ENCODE measurements at regions of chr11 and their contacts with region 1.

Region 1: DNA sequence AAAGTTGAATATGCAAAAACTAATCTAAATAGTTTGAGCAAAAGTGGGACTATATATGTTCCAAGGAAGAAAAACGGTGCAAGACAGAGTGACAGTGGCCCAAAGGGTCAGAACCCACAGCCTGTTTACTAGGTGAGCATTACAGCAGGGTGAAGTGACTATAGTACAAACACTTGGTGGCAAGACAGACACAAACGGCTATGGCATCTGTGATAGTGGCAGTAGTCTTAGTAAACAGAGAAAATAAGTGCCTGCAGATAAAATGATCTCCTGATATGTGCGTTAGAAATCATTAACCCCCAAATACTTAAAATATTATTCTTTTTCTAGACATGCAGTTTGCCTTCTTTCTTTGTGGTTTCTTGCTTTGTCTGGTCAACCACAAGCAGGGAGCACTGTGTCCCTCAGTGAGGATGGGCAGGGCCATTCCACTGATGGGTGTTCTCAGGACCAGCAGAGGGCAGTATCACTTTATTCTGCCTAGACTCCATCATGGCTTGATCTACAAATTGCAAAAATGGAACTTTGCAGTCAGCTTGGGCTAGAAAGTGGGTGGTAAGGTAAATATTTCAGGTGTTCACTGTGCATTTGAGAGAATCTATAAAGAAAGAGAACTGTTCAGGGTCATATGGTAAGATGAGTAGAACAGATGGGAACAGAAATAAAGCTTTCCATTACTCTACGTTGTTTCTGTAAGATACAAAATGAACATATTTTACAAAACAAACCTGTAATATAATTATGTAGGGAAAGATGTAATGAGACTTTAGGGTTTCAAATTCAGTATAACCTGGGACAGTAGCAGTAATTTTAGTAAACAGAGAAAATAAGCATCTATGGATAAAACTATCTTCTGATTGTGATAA is 198.2 kb downstream of the SWAP70 start:
- DNase-seq: peak; percentile 50
- ATAC-seq: peak; percentile 88 to 90

Region 2: GRCh38 chr11:10091314-10092045 is 229.4 kb after region 1 on chr11:
- intact Hi-C with region 1: no loop called
- DNase-seq: no peak
- ATAC-seq: no peak

Region 3: DNA sequence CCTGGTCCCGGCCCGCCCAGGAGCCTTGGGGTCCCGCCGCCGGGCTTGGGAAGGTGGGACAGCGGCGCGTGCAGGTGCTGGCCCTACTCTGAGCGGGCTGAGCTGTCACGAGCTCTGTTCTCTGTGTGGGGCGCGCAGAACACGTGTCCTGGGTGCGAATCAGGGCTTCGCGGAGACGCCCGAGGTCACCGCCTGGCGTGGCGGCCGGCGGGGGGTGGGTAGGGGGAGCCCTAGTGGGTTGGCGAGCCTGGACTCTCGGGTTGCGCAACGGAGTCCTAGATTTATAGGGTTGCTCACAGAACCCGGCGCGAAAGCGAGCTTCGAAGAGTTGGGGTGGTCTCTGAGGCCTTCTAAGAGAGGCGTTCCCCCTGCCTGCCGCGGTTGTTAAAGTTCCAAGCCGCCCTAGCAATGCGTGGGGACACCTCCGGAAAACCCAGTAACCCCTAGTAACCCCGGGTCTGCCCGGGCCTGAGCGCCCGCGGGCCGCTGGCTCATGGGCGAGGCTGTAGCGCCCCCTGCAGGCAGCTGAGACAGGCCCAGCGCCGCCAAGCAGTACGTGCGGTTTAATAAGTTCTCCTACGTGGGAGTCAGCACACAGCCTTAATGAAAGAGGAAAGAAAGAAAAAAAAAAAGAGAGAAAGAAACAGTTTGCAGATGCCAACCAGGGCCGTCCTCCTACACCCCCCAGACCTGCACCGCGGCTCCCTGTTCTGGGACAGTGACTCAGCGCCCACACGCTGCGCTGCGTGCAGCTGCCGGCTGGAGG is 445.5 kb after region 1 on chr11:
- intact Hi-C with region 1: loop called in 1 of 2 experiments (anchors 5 kb)
- DNase-seq: peak; percentile 86
- ATAC-seq: peak; percentile 60 to 68

Region 4: DNA sequence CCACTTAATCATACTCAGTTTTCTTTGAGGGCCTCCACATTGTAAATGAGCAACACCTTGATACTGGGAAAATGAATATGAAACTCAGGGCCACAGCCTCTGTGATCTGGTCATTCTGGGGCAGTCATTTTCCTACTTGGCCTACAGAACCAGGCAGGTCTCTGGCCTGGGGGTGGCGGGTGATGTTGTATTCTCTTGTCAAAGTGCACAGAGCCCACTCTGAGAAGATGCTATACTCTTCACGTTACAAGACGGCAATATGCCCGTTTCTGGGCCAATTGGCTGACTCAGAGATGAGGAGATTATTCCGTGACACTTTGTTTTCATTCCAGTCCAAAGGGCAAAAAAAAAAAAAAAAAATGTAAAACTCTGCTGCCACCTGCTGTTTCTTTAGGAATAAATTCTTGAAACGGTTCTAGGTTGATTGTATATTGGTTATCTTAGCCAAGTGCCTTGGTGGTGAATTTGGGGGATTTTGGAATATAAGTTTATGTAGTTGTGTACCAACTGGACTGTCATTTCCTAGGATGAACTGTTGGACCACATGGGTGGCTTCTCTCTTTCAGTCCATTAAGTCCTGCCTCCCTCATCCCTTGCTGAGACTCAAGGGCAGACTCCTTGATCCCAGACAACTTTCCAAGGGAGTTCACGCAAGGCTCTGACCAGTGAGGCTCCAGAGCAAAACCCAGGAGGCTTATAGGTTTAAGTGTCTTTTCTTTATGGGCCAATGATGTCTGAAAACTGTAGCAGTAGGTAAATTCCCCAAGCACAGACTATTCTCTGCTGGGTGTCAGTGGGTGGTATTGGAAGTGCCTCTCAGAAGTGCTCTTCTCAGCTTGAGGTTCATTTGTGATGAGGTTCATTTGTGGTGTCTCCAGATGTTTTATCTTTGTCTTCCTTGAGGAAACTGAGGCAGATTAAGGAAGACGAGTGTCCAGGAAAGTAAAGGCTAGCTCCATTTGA is 461.0 kb after region 1 on chr11:
- intact Hi-C with region 1: loop called in 1 of 2 experiments (anchors 5 kb)
- DNase-seq: peak; percentile 58
- ATAC-seq: peak; percentile 30 to 68